ENCODE measurements at regions of chr22 and their contacts with region 1.

Region 1: GRCh38 chr22:36123673-36124630 is 36.6 kb downstream of the APOL3 start:
- H3K4me3 Mint-ChIP-seq: peak overlapping the region; percentile 27
- H3K27ac Mint-ChIP-seq: peak overlapping the region; percentile 84
- H3K4me1 Mint-ChIP-seq: peaks cover 20% of the 10 kb centered on the region
- H3K27me3 Mint-ChIP-seq: peaks cover 23% of the 10 kb centered on the region

Region 2: DNA sequence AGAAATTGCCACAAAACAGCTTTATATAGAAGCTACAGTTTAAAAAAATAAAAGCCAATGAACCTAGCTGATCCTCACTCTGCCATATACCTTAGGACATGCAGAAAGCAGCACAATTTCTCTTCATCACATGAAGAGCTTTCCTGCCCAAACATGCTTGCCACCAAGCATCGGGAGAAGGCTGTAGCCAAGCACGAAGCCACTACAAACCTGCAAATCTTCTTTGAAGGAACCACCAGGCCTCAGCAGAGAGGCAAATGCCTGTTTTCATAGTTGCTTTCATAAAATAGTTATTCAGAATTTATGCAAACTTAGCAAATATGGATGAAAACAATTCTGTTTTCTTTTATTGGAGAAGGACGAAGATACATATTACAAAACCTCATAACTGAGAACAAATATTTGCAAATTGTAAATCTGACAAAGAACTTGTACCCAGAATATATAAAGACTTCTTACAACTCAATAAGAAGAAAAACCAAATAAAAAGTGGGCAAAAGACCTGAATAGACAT is 195.6 kb before region 1 on chr22:
- intact Hi-C with region 1: loop called (anchors 5 kb)
- H3K4me3 Mint-ChIP-seq: no peak overlapping the region
- H3K27ac Mint-ChIP-seq: no peak overlapping the region
- H3K4me1 Mint-ChIP-seq: no peaks in the 10 kb centered on the region
- H3K27me3 Mint-ChIP-seq: no peaks in the 10 kb centered on the region

Region 3: GRCh38 chr22:35947794-35948425 is 176.0 kb before region 1 on chr22:
- intact Hi-C with region 1: no loop called
- H3K4me3 Mint-ChIP-seq: no peak overlapping the region
- H3K27ac Mint-ChIP-seq: no peak overlapping the region
- H3K4me1 Mint-ChIP-seq: no peaks in the 10 kb centered on the region
- H3K27me3 Mint-ChIP-seq: peaks cover 1% of the 10 kb centered on the region

Region 4: GRCh38 chr22:36065775-36066559 is 58.0 kb before region 1 on chr22:
- intact Hi-C with region 1: no loop called
- H3K4me3 Mint-ChIP-seq: peak overlapping the region; percentile 73
- H3K27ac Mint-ChIP-seq: peak overlapping the region; percentile 64
- H3K4me1 Mint-ChIP-seq: peaks cover 11% of the 10 kb centered on the region
- H3K27me3 Mint-ChIP-seq: peaks cover 53% of the 10 kb centered on the region

Measured in dendritic cell treated with granulocyte-macrophage colony-stimulating factor and Interleukin-4, amounts not matched to agents 40 ng/mL and 50 ng/mL, for 4 days (primary cell).